OCI-LY7 (cell line): ENCODE measurements at regions of chr2 and their contacts with region 1.

Region 1: GRCh38 chr2:177148477-177149154 is 64.0 kb upstream of the HNRNPA3 start:
- DNase-seq: peak; percentile 75
- H3K4me3 ChIP-seq: peak overlapping the region; percentile 65
- H3K27ac ChIP-seq: no peak overlapping the region
- H3K4me1 ChIP-seq: peaks cover 9% of the 10 kb centered on the region
- CTCF ChIP-seq: peak; percentile 98

Region 2: DNA sequence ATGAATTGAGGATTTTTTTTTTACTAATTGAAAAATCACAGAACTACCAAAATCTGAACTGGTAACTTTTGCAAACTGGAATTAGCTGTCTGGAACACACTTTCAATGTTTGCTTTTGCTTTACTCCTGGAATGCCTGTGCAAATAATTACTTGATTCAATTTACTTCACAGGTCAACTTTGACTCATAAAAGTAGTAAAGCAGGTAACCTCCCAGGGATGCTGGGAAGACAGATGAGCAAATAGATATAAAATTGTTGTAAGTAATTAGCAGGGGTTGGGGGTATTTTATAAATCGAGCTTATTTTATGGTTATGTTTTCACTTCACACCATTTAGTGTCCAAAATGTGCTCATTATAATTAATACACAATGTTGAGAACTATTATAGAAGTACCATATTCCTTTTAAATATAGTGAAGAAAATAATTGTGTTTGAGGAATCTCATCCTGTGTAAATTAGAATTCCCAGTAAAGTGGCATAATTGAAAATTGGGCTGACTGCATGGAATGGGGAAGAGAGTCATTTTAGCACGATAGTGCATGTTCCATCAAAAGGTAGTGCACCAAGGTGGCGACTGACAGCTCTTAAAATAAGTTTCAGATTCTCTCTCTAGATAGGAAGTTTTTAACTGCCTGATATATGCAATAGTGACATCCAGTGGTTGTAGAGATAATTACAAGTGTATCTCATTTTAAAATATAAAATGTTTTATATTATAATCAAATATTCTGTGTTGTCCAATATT is 334.1 kb before region 1 on chr2:
- CTCF ChIA-PET with region 1: no interaction called
- POLR2A ChIA-PET with region 1: no interaction called
- intact Hi-C with region 1: loop called (anchors 5 kb)
- DNase-seq: peak; percentile 78
- H3K4me3 ChIP-seq: no peak overlapping the region
- H3K27ac ChIP-seq: no peak overlapping the region
- H3K4me1 ChIP-seq: peaks cover 17% of the 10 kb centered on the region
- CTCF ChIP-seq: peak; percentile 89

Region 3: DNA sequence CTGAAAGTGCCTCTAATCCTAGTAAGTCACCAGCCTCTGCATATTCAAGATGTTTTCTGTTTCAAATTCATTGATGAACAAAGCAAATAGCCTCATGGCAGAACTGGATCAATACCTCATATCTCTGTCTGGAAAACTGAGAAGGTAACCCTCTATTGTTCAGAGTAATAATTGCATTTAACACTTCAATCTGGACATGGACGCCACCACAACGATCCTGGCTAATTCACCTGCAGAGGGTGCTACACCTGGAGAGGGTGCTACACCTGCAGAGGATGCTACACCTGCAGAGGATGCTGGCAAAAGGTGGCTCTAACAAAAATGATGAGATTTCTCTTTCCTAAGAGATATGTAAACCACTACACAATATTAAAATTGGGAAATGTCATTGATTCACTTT is 119.1 kb before region 1 on chr2:
- CTCF ChIA-PET with region 1: no interaction called
- POLR2A ChIA-PET with region 1: no interaction called
- intact Hi-C with region 1: loop called (anchors 5 kb)
- DNase-seq: peak; percentile 2
- H3K4me3 ChIP-seq: no peak overlapping the region
- H3K27ac ChIP-seq: no peak overlapping the region
- H3K4me1 ChIP-seq: no peaks in the 10 kb centered on the region
- CTCF ChIP-seq: peak; percentile 62